ENCODE measurements at regions of chr2 and their contacts with region 1.

Region 1: DNA sequence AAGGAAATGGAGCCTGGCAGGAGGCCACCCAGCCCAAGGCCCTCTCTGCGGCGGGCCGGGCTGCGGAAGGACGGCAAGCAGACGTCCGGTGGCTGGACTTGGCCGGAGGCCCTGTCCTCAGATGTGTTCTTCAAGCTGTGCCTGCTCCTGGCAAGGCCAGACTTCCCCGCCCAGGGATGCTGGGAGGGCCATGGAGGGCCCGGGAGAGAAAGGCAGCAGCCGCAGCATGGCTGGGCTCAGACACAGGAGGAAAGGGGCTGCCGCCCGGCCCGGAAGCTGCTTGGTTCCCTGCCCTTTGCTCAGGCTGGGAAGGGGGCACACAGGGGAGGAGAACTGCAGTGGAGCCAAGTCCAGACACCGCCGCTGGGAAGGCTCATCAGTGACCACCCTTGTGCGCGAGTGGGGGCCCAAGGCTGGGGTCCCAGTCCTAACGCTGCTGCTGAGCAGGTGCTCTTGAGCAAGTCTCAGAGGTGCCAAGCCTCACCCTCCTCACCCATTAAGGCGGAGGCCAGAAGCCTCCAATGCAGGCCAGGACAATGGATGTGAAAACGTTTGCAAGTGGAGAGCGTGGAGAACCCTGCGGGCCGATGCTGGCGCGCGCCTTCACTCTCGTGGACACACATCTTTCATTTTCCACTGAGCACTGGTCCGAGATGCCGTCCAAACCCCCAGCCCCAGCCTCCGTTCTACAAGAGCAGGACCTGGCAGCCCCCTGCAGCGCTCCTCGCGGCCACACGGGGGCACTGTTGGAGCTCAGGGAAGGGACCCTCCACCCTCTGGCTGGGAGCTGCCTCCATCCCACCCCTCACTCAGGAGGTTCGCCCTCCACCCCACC is 7.9 kb downstream of the CROCC2 start:
- DNase-seq: peak; percentile 91
- ATAC-seq: peak; percentile 63

Region 2: DNA sequence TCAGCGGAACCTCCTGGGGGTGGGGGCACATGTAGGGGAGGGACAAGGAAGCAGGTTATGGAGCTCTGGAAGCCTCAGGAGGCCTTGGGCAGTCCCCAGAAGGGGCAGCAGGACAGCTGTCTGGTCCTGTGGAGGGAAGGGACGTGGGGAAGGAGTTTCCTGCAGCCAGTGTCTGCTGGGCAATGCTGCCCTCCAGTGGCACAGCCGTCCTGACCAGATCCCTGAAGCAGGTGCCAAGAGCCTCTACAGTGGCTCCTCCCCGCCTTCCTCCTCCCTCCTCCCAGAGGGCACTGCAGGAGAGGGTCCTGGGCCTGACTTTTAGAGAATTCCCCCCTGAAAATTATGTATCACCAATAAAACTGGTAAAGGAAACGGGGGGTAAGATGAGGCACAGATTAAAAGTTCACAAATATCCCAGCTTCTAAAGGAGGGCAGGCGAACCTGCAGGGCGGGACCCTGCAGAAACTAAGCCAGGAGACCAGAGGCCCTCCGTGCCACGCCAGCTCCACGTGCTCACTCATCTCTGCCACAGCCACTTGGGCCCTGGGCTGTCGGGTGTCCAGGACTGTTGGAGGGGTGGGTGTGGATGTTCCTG is 1807.6 kb before region 1 on chr2:
- intact Hi-C with region 1: no loop called
- DNase-seq: no peak
- ATAC-seq: peak; percentile 55

Region 3: GRCh38 chr2:240856151-240856980 is 57.7 kb before region 1 on chr2:
- intact Hi-C with region 1: loop called (anchors 5 kb)
- DNase-seq: no peak
- ATAC-seq: no peak

Region 4: GRCh38 chr2:240893363-240893844 is 20.6 kb before region 1 on chr2:
- intact Hi-C with region 1: no loop called
- DNase-seq: no peak
- ATAC-seq: no peak

Region 5: GRCh38 chr2:240991373-240992263 is 77.6 kb after region 1 on chr2:
- intact Hi-C with region 1: loop called (anchors 5 kb)
- DNase-seq: peak; percentile 92
- ATAC-seq: peak; percentile 81

Measured in Right ventricle myocardium inferior (tissue), 1 donor.